Head of caudate nucleus (tissue), 42 donors: ENCODE measurements at regions of chr21 and their contacts with region 1.

Region 1: GRCh38 chr21:32371913-32372314 is 20.9 kb downstream of the URB1 start:
- DNase-seq: no peak

Region 2: GRCh38 chr21:32306021-32306780 is 65.7 kb before region 1 on chr21:
- intact Hi-C with region 1: loop called (anchors 10 kb)
- DNase-seq: peak; percentile 59 to 93 (median 84)